ENCODE measurements at regions of chr6 and their contacts with region 1.

Region 1: DNA sequence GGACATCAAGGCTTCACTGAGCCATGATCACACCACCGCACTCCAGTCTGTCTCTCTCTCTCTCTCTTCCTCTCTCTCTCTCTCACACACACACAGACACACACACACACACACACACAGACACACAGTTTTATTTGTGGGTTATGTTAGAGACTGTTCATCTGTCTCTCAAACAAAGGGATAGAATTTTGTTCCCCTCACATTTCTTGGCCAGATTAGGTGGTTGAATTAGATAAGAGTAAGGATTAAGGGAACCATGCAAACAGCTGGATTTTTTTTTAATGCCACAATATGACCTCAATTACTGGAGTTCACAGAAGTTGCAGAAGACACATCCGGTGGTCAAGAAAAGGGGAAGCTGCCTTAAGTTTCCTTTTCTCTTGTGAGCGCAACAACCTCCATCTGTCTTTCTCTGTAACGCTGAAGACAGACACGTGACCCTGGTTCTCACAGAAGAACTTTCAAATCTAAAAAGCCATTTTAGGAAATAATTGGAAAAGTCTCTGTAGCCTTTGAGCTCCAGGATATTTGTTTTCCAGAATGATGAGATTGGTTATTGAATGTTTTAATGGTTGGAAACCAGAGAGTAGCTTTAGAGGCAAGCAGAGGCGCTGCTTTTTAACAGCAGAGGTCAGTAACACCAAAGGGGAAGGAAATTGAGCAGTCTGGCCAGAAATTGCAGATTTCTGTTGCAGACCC is 33.0 kb upstream of the LGSN start:
- DNase-seq: no peak

Region 2: DNA sequence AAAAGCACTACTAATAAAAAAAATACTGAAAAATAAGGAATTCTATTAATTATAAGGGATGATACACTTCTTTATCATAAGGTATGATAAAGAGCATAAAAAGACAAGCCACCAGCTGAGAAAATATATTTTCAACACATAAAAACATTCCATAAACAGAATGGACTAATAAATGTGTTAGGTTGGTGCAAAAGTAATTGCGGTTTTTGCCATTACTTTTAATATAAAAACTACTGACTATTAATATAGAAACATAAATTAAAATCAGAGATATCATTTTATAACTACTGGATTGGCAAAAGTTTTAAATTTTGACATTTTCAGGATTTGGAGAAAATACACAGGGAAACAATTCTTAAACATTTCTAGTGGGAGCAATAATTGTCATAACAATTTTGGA is 178.6 kb before region 1 on chr6:
- intact Hi-C with region 1: no loop called
- DNase-seq: no peak

Region 3: DNA sequence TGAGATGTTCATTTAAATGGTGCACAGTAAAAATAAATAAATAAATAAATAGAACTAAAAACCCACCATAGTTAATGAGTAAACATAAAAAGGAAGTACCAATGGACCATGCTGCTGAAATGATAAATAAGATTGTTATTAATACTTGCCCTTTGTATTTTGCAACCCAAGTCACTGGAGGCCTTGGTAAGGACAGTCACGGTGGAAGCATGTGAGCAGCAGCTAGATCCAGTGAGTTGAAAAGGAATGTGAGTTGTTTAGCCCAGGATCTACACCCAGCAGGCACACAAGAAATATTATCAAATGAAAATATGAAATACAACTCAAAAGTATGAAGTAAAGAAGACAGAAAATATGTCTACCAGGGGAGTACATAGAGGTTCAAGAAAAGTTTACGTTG is 39.6 kb before region 1 on chr6:
- intact Hi-C with region 1: no loop called
- DNase-seq: no peak

Region 4: GRCh38 chr6:63571881-63572732 is 219.4 kb after region 1 on chr6 and contains the starts of genes LOC128125822 and PTP4A1:
- intact Hi-C with region 1: loop called (anchors 10 kb)
- DNase-seq: peak; percentile 99
- total RNA-seq, gene PTP4A1: 42.6 TPM

Region 5: DNA sequence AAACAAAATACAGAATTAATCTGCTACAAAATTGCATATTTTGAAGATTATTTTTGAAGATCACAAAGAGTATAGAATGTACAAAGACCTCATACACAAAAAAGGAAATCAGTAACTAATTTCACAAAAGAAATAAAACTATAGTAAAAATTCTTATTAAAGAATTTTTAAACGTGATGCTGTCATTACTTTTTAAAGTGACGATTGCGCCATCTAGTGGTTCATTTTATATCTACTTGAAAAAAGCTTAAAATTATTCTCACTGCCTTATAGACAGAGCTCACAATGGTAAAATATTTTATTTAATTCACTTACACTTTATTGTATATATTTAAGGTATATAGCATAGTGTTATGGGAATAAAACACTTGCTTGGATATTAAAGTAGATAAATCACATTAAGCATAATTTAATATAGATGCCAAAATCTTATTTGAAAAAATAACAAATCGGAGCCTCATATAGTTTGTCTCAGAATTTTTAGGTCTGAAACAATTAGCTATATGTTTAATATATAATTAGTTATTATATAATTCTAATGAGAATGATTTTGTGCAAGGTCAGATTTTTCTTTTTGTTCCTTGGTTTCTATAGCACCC is 411.7 kb after region 1 on chr6:
- intact Hi-C with region 1: loop called (anchors 5 kb)
- DNase-seq: no peak

Measured in cardiac septum (tissue), 1 donor.